ENCODE measurements at regions of chr13 and their contacts with region 1.

Region 1: GRCh38 chr13:78241278-78241919 is 322.8 kb upstream of the EDNRB start:
- DNase-seq: no peak
- ATAC-seq: peak; percentile 77
- H3K4me3 ChIP-seq: no peak overlapping the region
- H3K27ac ChIP-seq: no peak overlapping the region
- H3K4me1 ChIP-seq: no peaks in the 10 kb centered on the region
- H3K27me3 ChIP-seq: no peaks in the 10 kb centered on the region
- CTCF ChIP-seq: peak; percentile 54 to 74 (median 70)
- EP300 ChIP-seq: no peak
- POLR2A ChIP-seq: no peak
- RAD21 ChIP-seq: peak; percentile 87

Region 2: DNA sequence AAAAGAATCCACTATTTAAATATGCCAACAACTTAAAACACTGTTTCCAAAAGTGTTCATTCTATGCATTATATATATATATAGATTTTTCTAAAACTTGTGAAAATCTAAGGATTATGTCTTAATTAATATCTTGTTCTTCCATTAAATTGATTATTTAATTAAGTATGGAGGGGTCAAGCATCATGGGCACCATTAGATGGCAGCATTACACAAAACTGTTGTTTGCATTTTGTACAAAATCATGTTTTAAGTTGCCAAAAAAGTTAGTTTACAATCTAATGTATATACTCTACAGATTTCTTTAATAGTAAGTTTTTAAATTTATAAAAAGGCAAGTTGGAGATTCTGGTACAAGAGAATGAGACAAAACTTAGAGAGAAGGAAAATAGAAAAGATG is 109.6 kb before region 1 on chr13:
- CTCF ChIA-PET with region 1: interaction called, 73 read pairs
- POLR2A ChIA-PET with region 1: no interaction called
- RAD21 ChIA-PET with region 1: interaction called, 50 read pairs
- SMC1A ChIA-PET with region 1: interaction called, 7 read pairs
- in situ Hi-C with region 1: no loop called
- intact Hi-C with region 1: no loop called
- DNase-seq: no peak
- ATAC-seq: no peak
- H3K4me3 ChIP-seq: no peak overlapping the region
- H3K27ac ChIP-seq: no peak overlapping the region
- H3K4me1 ChIP-seq: no peaks in the 10 kb centered on the region
- H3K27me3 ChIP-seq: no peaks in the 10 kb centered on the region; a peak in 1 of 4 replicates
- CTCF ChIP-seq: peak in 1 of 3 experiments; percentile 36; a peak in 1 of 6 replicates
- EP300 ChIP-seq: no peak
- POLR2A ChIP-seq: no peak
- RAD21 ChIP-seq: peak; percentile 53

Region 3: DNA sequence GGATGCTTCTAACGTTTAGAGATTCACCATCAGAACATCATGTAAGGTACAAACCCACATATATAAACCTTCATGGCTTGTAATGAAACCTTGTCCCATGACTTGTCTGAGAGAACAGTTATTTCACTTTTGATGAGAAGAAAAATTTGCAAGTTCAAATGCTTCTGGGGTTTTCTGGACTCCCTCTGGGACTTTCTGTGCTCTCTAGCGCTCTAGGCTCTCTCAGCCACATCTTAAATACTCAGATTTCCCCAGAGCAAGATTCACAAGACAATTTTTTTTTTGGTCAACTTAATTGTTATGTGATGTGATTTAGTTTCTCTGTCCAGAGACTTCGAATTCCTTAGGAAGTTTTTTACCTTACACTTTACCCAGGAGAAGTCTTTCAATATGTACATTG is 40.0 kb before region 1 on chr13:
- CTCF ChIA-PET with region 1: interaction called, 11 read pairs
- POLR2A ChIA-PET with region 1: no interaction called
- RAD21 ChIA-PET with region 1: interaction called, 7 read pairs
- SMC1A ChIA-PET with region 1: interaction called, 22 read pairs
- in situ Hi-C with region 1: no loop called
- intact Hi-C with region 1: no loop called
- DNase-seq: peak; percentile 64
- ATAC-seq: peak; percentile 86
- H3K4me3 ChIP-seq: no peak overlapping the region
- H3K27ac ChIP-seq: no peak overlapping the region
- H3K4me1 ChIP-seq: no peaks in the 10 kb centered on the region
- H3K27me3 ChIP-seq: no peaks in the 10 kb centered on the region
- CTCF ChIP-seq: no peak
- EP300 ChIP-seq: peak in 1 of 2 experiments; percentile 59; a peak in 1 of 4 replicates
- POLR2A ChIP-seq: no peak
- RAD21 ChIP-seq: no peak

Region 4: GRCh38 chr13:78228940-78229339 is 12.5 kb before region 1 on chr13:
- CTCF ChIA-PET with region 1: interaction called, 15 read pairs
- POLR2A ChIA-PET with region 1: interaction called, 3 read pairs
- RAD21 ChIA-PET with region 1: interaction called, 8 read pairs
- SMC1A ChIA-PET with region 1: interaction called, 3 read pairs
- in situ Hi-C with region 1: no loop called
- intact Hi-C with region 1: no loop called
- DNase-seq: no peak
- ATAC-seq: no peak
- H3K4me3 ChIP-seq: no peak overlapping the region
- H3K27ac ChIP-seq: no peak overlapping the region
- H3K4me1 ChIP-seq: no peaks in the 10 kb centered on the region
- H3K27me3 ChIP-seq: no peaks in the 10 kb centered on the region
- CTCF ChIP-seq: no peak
- EP300 ChIP-seq: no peak
- POLR2A ChIP-seq: no peak
- RAD21 ChIP-seq: no peak

Region 5: DNA sequence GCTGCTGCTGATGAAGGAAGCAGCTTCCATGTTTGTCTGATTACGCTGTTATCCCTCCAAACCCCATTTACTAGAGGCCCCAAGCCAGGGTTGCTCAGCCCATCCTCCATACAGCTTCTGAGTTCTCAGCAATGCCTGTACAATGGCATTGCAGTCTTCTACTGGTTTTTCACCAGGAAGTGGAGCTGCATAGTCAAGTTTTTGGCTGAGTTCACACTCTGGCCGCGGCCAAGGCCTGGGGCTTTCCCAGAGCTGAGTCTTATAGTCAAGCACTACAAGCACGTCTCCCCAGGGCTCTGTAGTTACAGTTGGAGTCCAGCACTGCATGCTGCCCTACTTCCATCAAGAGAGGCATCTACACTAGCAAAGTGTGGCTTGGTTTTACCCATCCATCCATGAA is 179.4 kb after region 1 on chr13:
- CTCF ChIA-PET with region 1: interaction called, 3 read pairs
- POLR2A ChIA-PET with region 1: no interaction called
- RAD21 ChIA-PET with region 1: interaction called, 13 read pairs
- SMC1A ChIA-PET with region 1: interaction called, 3 read pairs
- in situ Hi-C with region 1: no loop called
- intact Hi-C with region 1: no loop called
- DNase-seq: peak; percentile 37
- ATAC-seq: peak; percentile 100
- H3K4me3 ChIP-seq: no peak overlapping the region
- H3K27ac ChIP-seq: no peak overlapping the region
- H3K4me1 ChIP-seq: no peaks in the 10 kb centered on the region
- H3K27me3 ChIP-seq: no peaks in the 10 kb centered on the region
- CTCF ChIP-seq: peak in 1 of 3 experiments; percentile 42; a peak in 2 of 6 replicates
- EP300 ChIP-seq: no peak
- POLR2A ChIP-seq: no peak
- RAD21 ChIP-seq: peak; percentile 8; the same call in 1 of the 2 replicates

Region 6: GRCh38 chr13:79056706-79057105 is 815.3 kb after region 1 on chr13:
- CTCF ChIA-PET with region 1: interaction called, 49 read pairs
- POLR2A ChIA-PET with region 1: no interaction called
- RAD21 ChIA-PET with region 1: interaction called, 10 read pairs
- SMC1A ChIA-PET with region 1: interaction called, 25 read pairs
- in situ Hi-C with region 1: no loop called
- intact Hi-C with region 1: no loop called
- DNase-seq: no peak
- ATAC-seq: peak; percentile 71
- H3K4me3 ChIP-seq: no peak overlapping the region
- H3K27ac ChIP-seq: no peak overlapping the region
- H3K4me1 ChIP-seq: no peaks in the 10 kb centered on the region
- H3K27me3 ChIP-seq: no peaks in the 10 kb centered on the region
- CTCF ChIP-seq: peak; percentile 18 to 58 (median 42); a peak in 3 of 6 replicates
- EP300 ChIP-seq: no peak
- POLR2A ChIP-seq: no peak
- RAD21 ChIP-seq: peak; percentile 15; the same call in 1 of the 2 replicates

Region 7: DNA sequence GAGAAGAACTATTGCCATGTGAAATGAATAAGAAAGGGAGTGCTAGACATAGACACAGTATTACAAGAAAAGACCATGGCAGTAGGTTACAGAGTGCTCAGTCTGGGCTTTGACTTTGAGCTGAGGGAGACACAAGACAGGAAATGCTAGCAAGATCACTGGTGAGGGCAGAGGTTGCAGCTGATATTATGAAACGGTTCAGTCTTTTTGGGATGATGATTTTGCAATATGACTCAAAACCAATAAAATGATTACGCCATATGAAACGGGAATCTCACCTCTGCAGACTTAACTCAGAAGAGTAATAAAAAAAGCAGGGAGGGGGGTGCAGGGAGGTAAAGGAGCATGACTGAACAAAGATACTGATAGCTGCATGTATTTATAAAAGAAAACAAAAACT is 1041.6 kb after region 1 on chr13:
- CTCF ChIA-PET with region 1: no interaction called
- POLR2A ChIA-PET with region 1: no interaction called
- RAD21 ChIA-PET with region 1: no interaction called
- SMC1A ChIA-PET with region 1: no interaction called
- in situ Hi-C with region 1: no loop called
- intact Hi-C with region 1: no loop called
- DNase-seq: no peak
- ATAC-seq: peak; percentile 49; the same call in 2 of the 3 replicates
- H3K4me3 ChIP-seq: no peak overlapping the region
- H3K27ac ChIP-seq: no peak overlapping the region
- H3K4me1 ChIP-seq: no peaks in the 10 kb centered on the region
- H3K27me3 ChIP-seq: no peaks in the 10 kb centered on the region
- CTCF ChIP-seq: no peak
- EP300 ChIP-seq: no peak
- POLR2A ChIP-seq: no peak
- RAD21 ChIP-seq: no peak